MCF 10A (cell line): ENCODE measurements at regions of chr4 and their contacts with region 1.

Region 1: GRCh38 chr4:85756938-85757337 is 282.0 kb downstream of the ARHGAP24 start:
- DNase-seq: peak; percentile 61
- H3K4me3 Mint-ChIP-seq: no peak overlapping the region
- H3K27ac Mint-ChIP-seq: no peak overlapping the region
- H3K4me1 Mint-ChIP-seq: peaks cover 2% of the 10 kb centered on the region
- H3K27me3 Mint-ChIP-seq: no peaks in the 10 kb centered on the region
- CTCF ChIP-seq: peak; percentile 19

Region 2: DNA sequence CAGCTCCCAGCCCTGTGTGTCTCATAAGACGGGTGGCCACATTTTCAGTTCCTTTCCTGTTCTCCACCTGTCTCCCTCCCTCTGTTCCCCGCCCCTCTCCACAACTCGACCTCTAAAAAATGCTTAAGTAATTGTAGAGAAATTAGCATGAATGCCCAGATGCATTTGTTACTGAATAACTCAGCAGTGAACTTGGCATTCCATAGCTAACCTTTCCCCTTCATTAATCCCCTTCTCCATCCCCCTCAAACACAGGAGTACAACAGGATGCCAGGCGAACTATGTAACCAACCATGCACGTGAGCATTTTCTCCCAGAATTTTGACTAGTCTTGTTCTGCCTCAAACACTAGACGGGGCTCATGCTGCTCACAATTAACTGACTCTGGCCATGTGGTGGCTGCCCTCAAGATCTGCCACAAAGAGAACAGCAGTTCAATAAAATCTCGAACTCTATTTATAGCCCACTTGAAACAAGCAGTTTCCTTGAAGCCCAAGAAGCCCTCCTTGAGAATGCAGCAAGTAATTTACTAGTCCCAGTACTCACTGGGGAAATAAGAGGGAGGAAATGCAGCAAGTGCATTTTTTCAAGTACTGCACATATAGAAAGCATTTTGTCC is 69.2 kb after region 1 on chr4:
- CTCF ChIA-PET with region 1: no interaction called
- POLR2A ChIA-PET with region 1: no interaction called
- intact Hi-C with region 1: no loop called
- DNase-seq: peak; percentile 13
- H3K4me3 Mint-ChIP-seq: no peak overlapping the region
- H3K27ac Mint-ChIP-seq: no peak overlapping the region
- H3K4me1 Mint-ChIP-seq: peaks cover 62% of the 10 kb centered on the region
- H3K27me3 Mint-ChIP-seq: no peaks in the 10 kb centered on the region
- CTCF ChIP-seq: no peak

Region 3: GRCh38 chr4:86043755-86044592 is 287.0 kb after region 1 on chr4:
- CTCF ChIA-PET with region 1: interaction called, 5 read pairs
- POLR2A ChIA-PET with region 1: no interaction called
- intact Hi-C with region 1: loop called (anchors 1 kb)
- DNase-seq: peak; percentile 71
- H3K4me3 Mint-ChIP-seq: no peak overlapping the region
- H3K27ac Mint-ChIP-seq: no peak overlapping the region
- H3K4me1 Mint-ChIP-seq: peaks cover 5% of the 10 kb centered on the region
- H3K27me3 Mint-ChIP-seq: no peaks in the 10 kb centered on the region
- CTCF ChIP-seq: peak; percentile 66